ENCODE measurements at regions of chr5 and their contacts with region 1.

Region 1: GRCh38 chr5:150656191-150657132 is 4.6 kb upstream of the MYOZ3 start:
- DNase-seq: peak; percentile 85
- ATAC-seq: peak; percentile 86
- H3K4me3 Mint-ChIP-seq: peak overlapping the region; percentile 72
- H3K27ac Mint-ChIP-seq: peak overlapping the region; percentile 67
- H3K4me1 Mint-ChIP-seq: peaks cover 11% of the 10 kb centered on the region
- H3K27me3 Mint-ChIP-seq: peaks cover 4% of the 10 kb centered on the region

Region 2: DNA sequence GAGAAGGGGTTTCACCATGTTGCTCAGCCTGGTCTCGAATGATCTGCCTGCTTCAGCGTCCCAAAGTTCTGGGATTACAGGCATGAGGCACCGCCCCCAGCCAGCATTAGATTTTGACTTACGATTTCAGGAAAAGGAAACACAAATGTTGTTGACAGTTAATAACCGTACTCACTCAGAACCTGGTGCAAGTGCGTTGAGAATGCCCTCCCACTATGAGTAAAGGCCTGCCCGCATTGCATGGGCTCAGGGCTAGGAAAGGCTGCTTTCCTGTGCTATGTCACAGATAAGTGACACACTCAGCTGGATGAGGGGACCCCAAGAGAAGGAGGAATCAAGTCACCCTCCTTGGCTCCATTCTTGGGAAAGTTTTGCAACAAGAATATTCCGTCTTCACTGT is 106.2 kb before region 1 on chr5:
- CTCF ChIA-PET with region 1: no interaction called
- POLR2A ChIA-PET with region 1: no interaction called
- DNase-seq: no peak
- ATAC-seq: no peak
- H3K4me3 Mint-ChIP-seq: no peak overlapping the region
- H3K27ac Mint-ChIP-seq: no peak overlapping the region
- H3K4me1 Mint-ChIP-seq: no peaks in the 10 kb centered on the region
- H3K27me3 Mint-ChIP-seq: no peaks in the 10 kb centered on the region

Region 3: GRCh38 chr5:150560401-150561193 is 95.9 kb before region 1 on chr5:
- CTCF ChIA-PET with region 1: interaction called, 25 read pairs
- POLR2A ChIA-PET with region 1: no interaction called
- DNase-seq: peak; percentile 91
- ATAC-seq: peak; percentile 94
- H3K4me3 Mint-ChIP-seq: no peak overlapping the region
- H3K27ac Mint-ChIP-seq: no peak overlapping the region
- H3K4me1 Mint-ChIP-seq: peaks cover 4% of the 10 kb centered on the region
- H3K27me3 Mint-ChIP-seq: peaks cover 2% of the 10 kb centered on the region

Region 4: GRCh38 chr5:150615141-150615699 is 41.2 kb before region 1 on chr5:
- CTCF ChIA-PET with region 1: no interaction called
- POLR2A ChIA-PET with region 1: no interaction called
- DNase-seq: no peak
- ATAC-seq: no peak
- H3K4me3 Mint-ChIP-seq: no peak overlapping the region
- H3K27ac Mint-ChIP-seq: no peak overlapping the region
- H3K4me1 Mint-ChIP-seq: no peaks in the 10 kb centered on the region
- H3K27me3 Mint-ChIP-seq: peaks cover 3% of the 10 kb centered on the region

Region 5: DNA sequence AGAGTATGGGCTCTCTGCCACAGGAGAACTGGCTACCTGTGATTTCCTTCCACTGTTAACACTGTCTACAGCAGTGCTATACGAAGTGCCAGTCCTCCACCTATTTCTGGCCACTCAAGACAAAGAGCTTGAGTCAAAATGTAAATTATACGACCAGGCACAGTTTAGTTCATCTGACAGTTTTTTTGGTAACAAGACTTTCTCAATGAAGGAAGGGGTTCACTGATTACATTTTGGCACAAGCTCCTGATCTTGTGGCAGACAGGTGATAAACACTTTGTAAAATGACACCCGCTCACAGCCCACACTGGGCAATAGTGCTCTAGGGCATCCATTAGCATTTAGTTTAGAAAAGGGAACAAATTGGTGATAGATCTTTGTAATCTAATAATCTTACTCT is 35.8 kb after region 1 on chr5:
- CTCF ChIA-PET with region 1: no interaction called
- POLR2A ChIA-PET with region 1: no interaction called
- DNase-seq: no peak
- ATAC-seq: no peak
- H3K4me3 Mint-ChIP-seq: no peak overlapping the region
- H3K27ac Mint-ChIP-seq: no peak overlapping the region
- H3K4me1 Mint-ChIP-seq: no peaks in the 10 kb centered on the region
- H3K27me3 Mint-ChIP-seq: no peaks in the 10 kb centered on the region

Measured in activated CD8-positive, alpha-beta T cell treated with anti-CD3 and anti-CD28 coated beads, Interleukin-2, amount 10 ng/mL, durations not matched to agents 7 days and 5 days (primary cell).